ENCODE measurements at regions of chr15 and their contacts with region 1.

Region 1: GRCh38 chr15:40274350-40275274 is 8.3 kb downstream of the ANKRD63 start:
- DNase-seq: peak; percentile 82
- H3K4me3 ChIP-seq: no peak overlapping the region
- H3K27ac ChIP-seq: no peak overlapping the region
- H3K4me1 ChIP-seq: no peaks in the 10 kb centered on the region
- H3K27me3 ChIP-seq: peaks cover 17 to 25% of the 10 kb centered on the region in 2 experiments
- CTCF ChIP-seq: peak; percentile 100
- POLR2A ChIP-seq: no peak

Region 2: DNA sequence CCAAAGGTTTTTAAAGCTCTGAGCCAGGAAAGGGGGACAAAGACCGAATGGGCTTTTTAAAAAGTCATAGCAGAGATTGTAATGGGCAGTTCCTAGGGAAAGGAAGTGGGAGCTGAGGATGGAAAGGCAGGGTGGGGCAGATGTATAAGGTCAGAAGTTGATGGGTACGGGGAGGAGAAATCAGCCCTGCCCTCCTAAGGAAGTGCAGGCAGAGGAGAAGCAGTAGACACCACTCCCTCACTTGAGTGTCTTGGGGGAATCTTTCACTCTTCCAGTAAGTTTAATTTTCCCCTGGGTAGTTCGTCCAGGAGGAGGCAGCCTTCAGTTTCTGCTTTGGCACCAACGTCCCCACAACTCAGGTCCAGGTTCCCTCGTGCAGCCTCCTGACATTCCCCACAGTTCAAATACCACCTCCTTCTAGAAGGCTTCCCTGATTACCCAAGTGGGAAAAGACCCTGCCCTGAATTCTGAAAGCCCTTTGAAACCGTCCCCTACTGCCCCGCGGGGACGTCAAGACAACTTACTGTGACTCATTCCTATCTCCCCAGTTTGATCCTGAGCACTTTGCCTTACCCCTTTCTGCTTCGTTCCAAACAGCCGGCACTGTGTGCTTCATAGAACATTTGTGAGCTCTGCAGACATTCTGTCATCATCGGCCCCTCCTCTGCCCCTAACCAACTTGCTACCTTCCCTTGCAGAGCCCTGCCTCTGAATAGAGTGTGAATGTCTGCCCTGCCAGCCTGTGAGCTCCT is 221.4 kb before region 1 on chr15:
- CTCF ChIA-PET with region 1: interaction called, 169 read pairs
- POLR2A ChIA-PET with region 1: no interaction called
- dilution Hi-C with region 1: no loop called
- intact Hi-C with region 1: no loop called
- DNase-seq: no peak
- H3K4me3 ChIP-seq: no peak overlapping the region
- H3K27ac ChIP-seq: no peak overlapping the region
- H3K4me1 ChIP-seq: peaks cover 1% of the 10 kb centered on the region
- H3K27me3 ChIP-seq: peaks cover 0 to 3% of the 10 kb centered on the region in 2 experiments
- CTCF ChIP-seq: peak in 1 of 2 donors; percentile 9
- POLR2A ChIP-seq: no peak

Region 3: GRCh38 chr15:40217159-40217824 is 57.3 kb before region 1 on chr15:
- CTCF ChIA-PET with region 1: interaction called, 879 read pairs
- POLR2A ChIA-PET with region 1: interaction called, 3 read pairs
- dilution Hi-C with region 1: no loop called
- intact Hi-C with region 1: loop called (anchors 1 kb)
- DNase-seq: peak; percentile 73
- H3K4me3 ChIP-seq: no peak overlapping the region
- H3K27ac ChIP-seq: no peak overlapping the region
- H3K4me1 ChIP-seq: peaks cover 3% of the 10 kb centered on the region
- H3K27me3 ChIP-seq: no peaks in the 10 kb centered on the region
- CTCF ChIP-seq: peak; percentile 60 to 71
- POLR2A ChIP-seq: no peak

Region 4: GRCh38 chr15:40256638-40257235 is 17.9 kb before region 1 on chr15:
- CTCF ChIA-PET with region 1: interaction called, 31 read pairs
- POLR2A ChIA-PET with region 1: no interaction called
- dilution Hi-C with region 1: no loop called
- intact Hi-C with region 1: no loop called
- DNase-seq: no peak
- H3K4me3 ChIP-seq: no peak overlapping the region
- H3K27ac ChIP-seq: no peak overlapping the region
- H3K4me1 ChIP-seq: peaks cover 11% of the 10 kb centered on the region
- H3K27me3 ChIP-seq: peaks cover 31 to 34% of the 10 kb centered on the region in 2 experiments
- CTCF ChIP-seq: no peak
- POLR2A ChIP-seq: no peak

Region 5: GRCh38 chr15:40323239-40323952 is 48.8 kb after region 1 on chr15 and contains the start of gene INAFM2:
- CTCF ChIA-PET with region 1: interaction called, 46 read pairs
- POLR2A ChIA-PET with region 1: no interaction called
- dilution Hi-C with region 1: no loop called
- intact Hi-C with region 1: no loop called
- DNase-seq: peak; percentile 98
- H3K4me3 ChIP-seq: peak within 1 kb of the TSS; percentile 41 to 67 (median 57)
- H3K27ac ChIP-seq: peak within 1 kb of the TSS; percentile 8
- H3K4me1 ChIP-seq: peaks cover 50% of the 10 kb centered on the region
- H3K27me3 ChIP-seq: no peaks in the 10 kb centered on the region
- CTCF ChIP-seq: peak; percentile 74 to 83
- POLR2A ChIP-seq: peak; percentile 67
- total RNA-seq, gene INAFM2: 23.6 and 24.1 TPM in 2 replicates

Region 6: DNA sequence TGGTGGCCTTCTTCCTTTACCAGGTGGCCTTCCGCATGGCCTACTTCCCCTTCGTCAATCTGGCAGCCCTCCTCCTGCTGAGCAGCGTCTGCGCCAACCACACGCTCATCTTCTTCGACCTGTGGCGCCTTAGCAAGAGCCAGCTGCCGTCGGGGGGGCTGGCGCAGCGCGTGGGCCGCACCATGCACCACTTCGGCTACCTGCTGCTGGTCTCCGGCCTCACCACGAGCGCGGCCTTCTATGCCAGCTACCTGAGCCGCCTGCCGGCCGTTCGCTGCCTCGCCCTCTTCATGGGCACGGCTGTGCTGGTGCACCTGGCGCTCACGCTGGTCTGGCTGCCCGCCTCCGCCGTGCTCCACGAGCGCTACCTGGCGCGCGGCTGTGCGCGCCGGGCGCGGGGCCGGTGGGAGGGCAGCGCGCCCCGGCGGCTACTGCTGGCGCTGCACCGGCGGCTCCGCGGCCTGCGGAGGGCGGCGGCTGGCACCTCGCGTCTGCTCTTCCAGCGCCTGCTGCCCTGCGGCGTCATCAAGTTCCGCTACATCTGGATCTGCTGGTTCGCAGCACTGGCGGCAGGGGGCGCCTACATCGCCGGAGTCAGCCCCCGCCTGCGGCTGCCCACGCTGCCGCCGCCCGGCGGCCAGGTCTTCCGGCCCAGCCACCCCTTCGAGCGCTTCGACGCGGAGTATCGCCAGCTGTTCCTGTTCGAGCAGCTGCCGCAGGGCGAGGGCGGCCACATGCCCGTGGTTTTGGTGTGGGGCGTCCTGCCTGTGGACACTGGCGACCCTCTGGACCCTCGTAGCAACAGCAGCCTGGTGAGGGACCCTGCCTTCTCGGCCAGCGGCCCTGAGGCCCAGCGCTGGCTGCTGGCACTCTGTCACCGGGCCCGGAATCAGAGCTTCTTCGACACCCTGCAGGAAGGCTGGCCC is 93.3 kb after region 1 on chr15:
- CTCF ChIA-PET with region 1: interaction called, 12 read pairs
- POLR2A ChIA-PET with region 1: no interaction called
- dilution Hi-C with region 1: no loop called
- intact Hi-C with region 1: no loop called
- DNase-seq: peak; percentile 85
- H3K4me3 ChIP-seq: peak overlapping the region in 2 of 3 experiments; percentile 15 to 22
- H3K27ac ChIP-seq: no peak overlapping the region
- H3K4me1 ChIP-seq: peaks cover 10% of the 10 kb centered on the region
- H3K27me3 ChIP-seq: no peaks in the 10 kb centered on the region
- CTCF ChIP-seq: peak; percentile 86 to 98
- POLR2A ChIP-seq: no peak

Region 7: DNA sequence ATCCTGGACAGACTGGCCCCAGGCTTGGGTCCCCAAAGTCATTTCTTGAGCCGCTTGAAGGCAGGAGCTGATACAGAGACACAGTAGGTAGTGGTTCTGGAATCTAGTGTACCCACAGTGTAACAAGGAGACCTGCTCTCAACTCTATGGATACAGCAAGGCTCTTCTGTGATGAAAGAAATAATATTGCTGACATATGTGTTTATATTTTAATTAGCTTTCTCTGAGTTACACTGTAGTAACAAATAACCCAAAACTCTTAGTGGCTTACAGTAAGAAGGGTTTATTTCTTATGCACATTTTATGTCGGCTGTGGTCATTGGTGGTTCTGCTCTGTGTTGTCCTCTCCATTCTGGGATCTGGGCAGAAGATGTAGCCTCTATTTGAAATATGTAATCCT is 241.7 kb after region 1 on chr15:
- CTCF ChIA-PET with region 1: no interaction called
- POLR2A ChIA-PET with region 1: no interaction called
- dilution Hi-C with region 1: no loop called
- intact Hi-C with region 1: no loop called
- DNase-seq: no peak
- H3K4me3 ChIP-seq: no peak overlapping the region
- H3K27ac ChIP-seq: no peak overlapping the region
- H3K4me1 ChIP-seq: no peaks in the 10 kb centered on the region
- H3K27me3 ChIP-seq: no peaks in the 10 kb centered on the region
- CTCF ChIP-seq: no peak
- POLR2A ChIP-seq: no peak